Breast epithelium (tissue), 4 donors: ENCODE measurements at regions of chr17 and their contacts with region 1.

Region 1: DNA sequence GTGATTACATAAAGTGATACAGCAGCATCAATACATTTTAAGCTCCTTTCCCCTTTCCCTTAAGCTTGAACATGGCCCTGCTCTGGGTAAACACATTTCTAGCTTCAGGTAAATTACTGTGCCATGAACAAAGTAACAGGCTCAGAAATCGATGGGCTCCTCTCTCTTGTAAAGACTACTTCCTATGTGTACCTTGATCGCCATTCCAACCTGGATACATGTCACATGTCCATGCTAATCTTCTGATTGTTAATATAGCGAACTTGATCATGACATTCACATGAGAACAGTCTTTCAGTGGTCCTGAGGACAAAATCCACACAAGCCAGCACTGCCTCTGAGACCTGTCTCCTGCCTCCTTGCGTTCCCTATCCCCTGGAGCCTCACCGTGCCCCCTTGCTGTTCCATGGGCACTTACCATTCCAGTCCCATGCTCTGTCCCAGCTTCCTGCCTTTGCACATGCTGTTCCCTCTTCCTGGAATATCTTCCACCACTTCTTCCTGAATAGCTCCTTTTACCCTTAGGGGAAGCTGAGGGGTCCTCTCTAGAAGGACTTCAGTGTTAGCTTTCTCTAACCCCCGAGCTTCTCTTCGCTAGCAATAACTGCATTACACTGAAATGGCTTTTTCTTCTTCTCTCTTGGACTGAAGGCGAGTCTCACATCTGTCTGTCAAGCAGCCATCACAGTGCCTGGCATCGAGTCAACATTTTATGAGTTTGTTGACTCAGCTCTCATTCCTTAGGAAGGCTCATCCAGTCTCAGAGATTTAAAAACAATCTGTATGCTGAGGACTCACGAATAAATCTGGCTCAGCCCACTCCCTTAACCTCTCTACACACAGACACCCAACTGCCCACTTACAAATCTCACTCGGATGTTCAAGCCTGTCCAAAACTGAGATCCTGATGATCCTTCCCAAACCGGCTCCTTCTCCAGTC is 93.3 kb downstream of the ASIC2 start:
- DNase-seq: no peak
- H3K4me3 ChIP-seq: no peak overlapping the region
- H3K27ac ChIP-seq: no peak overlapping the region
- H3K4me1 ChIP-seq: no peaks in the 10 kb centered on the region
- H3K27me3 ChIP-seq: peaks cover 0 to 14% of the 10 kb centered on the region in 2 donors
- CTCF ChIP-seq: no peak
- POLR2A ChIP-seq: no peak

Region 2: DNA sequence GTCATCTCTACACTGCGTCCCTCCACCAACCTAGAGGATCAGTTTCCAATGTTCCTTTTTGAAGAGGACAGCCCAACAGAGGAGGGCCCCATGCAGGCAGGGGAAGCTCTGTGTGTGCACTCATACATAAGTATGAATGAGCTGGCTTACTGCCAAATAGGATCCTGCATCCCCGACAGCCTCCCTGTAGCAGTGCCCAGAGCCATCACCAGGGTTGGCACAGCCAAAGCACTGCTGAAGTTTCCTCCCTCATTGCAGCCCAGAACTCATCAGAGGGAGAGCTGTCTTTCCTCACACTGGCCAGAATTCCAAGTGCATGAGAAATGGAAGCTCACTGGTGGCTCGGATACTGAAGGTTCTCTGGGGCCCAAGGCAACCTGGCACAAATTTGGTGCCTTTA is 21.2 kb before region 1 on chr17:
- intact Hi-C with region 1: loop called (anchors 1 kb)
- DNase-seq: no peak
- H3K4me3 ChIP-seq: no peak overlapping the region
- H3K27ac ChIP-seq: no peak overlapping the region
- H3K4me1 ChIP-seq: no peaks in the 10 kb centered on the region
- H3K27me3 ChIP-seq: peaks cover 0 to 7% of the 10 kb centered on the region in 2 donors
- CTCF ChIP-seq: no peak
- POLR2A ChIP-seq: no peak

Region 3: DNA sequence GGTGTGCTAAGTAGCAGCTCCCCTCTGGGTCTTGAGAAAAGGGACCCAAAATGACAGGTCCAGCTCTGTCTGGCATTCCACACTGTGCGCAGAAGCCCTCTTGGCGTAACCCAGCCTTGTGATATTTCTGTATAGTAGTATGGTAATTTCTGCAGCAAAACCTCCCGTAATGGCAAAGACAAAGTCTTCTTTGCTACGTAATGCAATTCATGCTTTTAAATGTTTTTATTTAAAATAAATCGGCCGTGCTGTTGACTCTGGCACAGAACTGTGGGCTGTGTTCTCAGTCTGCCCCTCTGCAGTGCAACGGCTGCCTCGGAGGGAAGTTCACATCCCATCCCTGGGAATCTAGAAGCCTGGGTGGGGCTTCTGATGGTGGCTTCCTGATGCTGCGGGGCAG is 18.1 kb after region 1 on chr17:
- intact Hi-C with region 1: loop called (anchors 1 kb)
- DNase-seq: no peak
- H3K4me3 ChIP-seq: no peak overlapping the region
- H3K27ac ChIP-seq: no peak overlapping the region
- H3K4me1 ChIP-seq: no peaks in the 10 kb centered on the region
- H3K27me3 ChIP-seq: peaks cover 0 to 7% of the 10 kb centered on the region in 2 donors
- CTCF ChIP-seq: no peak
- POLR2A ChIP-seq: no peak